Activated T-helper 2 cell treated with anti-CD3 and anti-CD28 coated beads, Interferon-gamma antibody, Interleukin-2, Interleukin-4, amounts not matched to agents 10 μg/mL and 5 μg/mL and 100 μg/mL, durations not matched to agents 14 hours and 24 hours and 36 hours (primary cell): ENCODE measurements at regions of chr10 and their contacts with region 1.

Region 1: GRCh38 chr10:86710987-86711512 is 42.7 kb downstream of the LDB3 start:
- DNase-seq: peak; percentile 81
- H3K4me3 Mint-ChIP-seq: peak overlapping the region; percentile 82
- H3K27ac Mint-ChIP-seq: peak overlapping the region; percentile 95
- H3K4me1 Mint-ChIP-seq: peaks cover 10% of the 10 kb centered on the region
- H3K27me3 Mint-ChIP-seq: no peaks in the 10 kb centered on the region

Region 2: GRCh38 chr10:86684331-86685097 is 26.5 kb before region 1 on chr10:
- intact Hi-C with region 1: no loop called
- DNase-seq: no peak
- H3K4me3 Mint-ChIP-seq: no peak overlapping the region
- H3K27ac Mint-ChIP-seq: no peak overlapping the region
- H3K4me1 Mint-ChIP-seq: no peaks in the 10 kb centered on the region
- H3K27me3 Mint-ChIP-seq: no peaks in the 10 kb centered on the region

Region 3: DNA sequence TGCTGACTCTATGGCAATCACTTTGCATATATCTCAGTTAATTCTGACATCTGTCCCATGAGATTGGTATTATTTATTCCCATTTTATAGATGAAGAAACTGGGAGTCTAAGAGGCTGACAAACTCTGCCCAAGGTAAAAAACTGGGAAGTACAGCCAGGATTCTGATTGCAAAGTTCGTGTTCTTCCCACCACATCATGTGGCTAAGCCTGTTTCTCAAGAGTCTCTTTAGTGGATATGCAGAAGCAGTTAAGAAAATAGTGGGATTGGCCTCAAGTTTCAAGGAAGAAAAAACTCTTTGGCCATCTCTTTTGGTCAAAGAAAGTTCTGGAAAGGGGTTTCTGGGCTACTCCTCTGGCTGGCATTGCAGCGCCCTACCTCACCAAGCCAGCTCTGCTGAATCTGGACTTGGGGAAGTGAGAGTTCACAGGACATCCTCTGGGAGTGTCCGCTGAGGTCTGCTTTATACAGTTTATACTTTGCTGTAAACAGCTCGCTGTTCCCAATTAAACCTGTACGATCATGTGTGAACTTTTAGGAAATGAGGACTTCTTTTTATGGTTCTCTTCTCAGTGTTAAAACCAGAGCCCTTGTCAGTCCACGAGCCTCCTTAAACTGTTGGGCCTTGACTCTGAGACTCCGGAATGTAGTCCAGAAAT is 33.1 kb after region 1 on chr10:
- intact Hi-C with region 1: no loop called
- DNase-seq: no peak
- H3K4me3 Mint-ChIP-seq: no peak overlapping the region
- H3K27ac Mint-ChIP-seq: no peak overlapping the region
- H3K4me1 Mint-ChIP-seq: no peaks in the 10 kb centered on the region
- H3K27me3 Mint-ChIP-seq: peaks cover 9% of the 10 kb centered on the region

Region 4: GRCh38 chr10:86755740-86756510 is 44.9 kb after region 1 on chr10:
- intact Hi-C with region 1: loop called (anchors 1 kb)
- DNase-seq: peak; percentile 84
- H3K4me3 Mint-ChIP-seq: peak overlapping the region; percentile 80
- H3K27ac Mint-ChIP-seq: peak overlapping the region; percentile 67
- H3K4me1 Mint-ChIP-seq: peaks cover 41% of the 10 kb centered on the region
- H3K27me3 Mint-ChIP-seq: peaks cover 43% of the 10 kb centered on the region

Region 5: DNA sequence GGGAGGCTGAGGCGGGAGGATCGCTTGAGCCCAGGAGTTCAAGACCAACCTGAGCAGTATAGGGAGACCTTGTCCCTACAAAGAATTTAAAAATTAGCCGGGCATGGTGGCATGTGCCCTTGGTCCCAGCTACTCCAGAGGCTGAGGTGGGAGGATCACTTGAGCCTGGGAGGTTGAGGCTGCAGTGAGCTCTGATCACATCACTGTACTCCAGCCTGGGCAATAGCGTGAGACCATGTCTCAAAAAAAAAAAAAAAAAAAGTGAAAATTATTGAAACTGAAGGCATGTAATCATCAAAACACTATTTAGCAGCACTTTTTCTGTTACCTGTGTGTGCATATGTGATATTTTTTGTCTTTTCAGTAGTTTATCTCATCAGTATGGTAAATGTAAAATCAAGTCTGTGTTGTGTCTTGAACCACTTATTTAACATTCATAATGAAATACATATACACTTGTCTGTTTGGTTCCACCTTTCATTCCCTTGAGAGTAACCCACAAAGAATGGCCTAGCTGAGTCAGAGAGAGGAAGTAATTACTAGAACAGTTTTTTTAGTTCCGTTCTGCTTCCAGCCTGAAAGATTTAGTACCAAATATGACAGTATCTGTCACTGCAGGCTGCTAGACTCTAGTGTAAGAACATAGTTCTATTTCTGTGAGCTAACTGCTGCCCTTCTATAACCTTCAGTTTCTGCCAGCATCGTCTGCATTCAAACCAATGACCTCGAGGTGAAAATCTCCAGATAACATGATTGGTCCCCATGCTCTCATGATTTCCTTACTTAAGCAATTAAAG is 177.7 kb after region 1 on chr10:
- intact Hi-C with region 1: loop called (anchors 2 kb)
- DNase-seq: no peak
- H3K4me3 Mint-ChIP-seq: no peak overlapping the region
- H3K27ac Mint-ChIP-seq: peak overlapping the region; percentile 73
- H3K4me1 Mint-ChIP-seq: peaks cover 13% of the 10 kb centered on the region
- H3K27me3 Mint-ChIP-seq: no peaks in the 10 kb centered on the region

Region 6: GRCh38 chr10:86960003-86960862 is 249.2 kb after region 1 on chr10:
- intact Hi-C with region 1: loop called (anchors 5 kb)
- DNase-seq: peak; percentile 25
- H3K4me3 Mint-ChIP-seq: no peak overlapping the region
- H3K27ac Mint-ChIP-seq: no peak overlapping the region
- H3K4me1 Mint-ChIP-seq: peaks cover 2% of the 10 kb centered on the region
- H3K27me3 Mint-ChIP-seq: no peaks in the 10 kb centered on the region